Mammary epithelial cell (primary cell): ENCODE measurements at regions of chr5 and their contacts with region 1.

Region 1: DNA sequence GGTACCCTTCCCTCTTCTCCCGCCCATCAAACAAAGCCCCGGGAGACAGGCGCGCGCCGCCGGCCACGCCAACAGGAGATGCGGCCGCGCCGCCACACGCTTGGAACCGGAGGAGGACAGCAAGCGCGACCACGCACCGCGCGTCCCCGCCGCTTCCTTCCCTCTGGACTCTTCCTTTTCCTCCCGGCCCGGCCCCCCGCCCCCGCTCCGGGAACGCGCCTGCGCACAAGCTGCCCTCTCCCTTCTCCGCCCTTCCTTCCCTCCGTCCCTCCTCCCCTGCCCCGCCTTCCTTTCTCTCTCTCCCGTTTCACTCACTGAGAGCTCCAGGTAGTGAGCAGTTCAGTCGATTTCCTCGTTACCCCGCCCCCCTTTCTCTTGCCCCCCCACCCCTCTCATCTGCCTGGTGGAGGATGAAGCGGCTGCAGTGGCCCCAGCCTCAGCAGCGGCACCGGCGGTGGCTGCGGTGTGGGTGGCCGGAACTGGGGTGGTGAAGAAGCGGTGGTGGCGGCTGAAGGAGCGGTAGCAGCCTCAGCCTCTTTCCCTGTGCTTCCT is at the start of gene RASA1:
- DNase-seq: peak; percentile 94
- H3K4me3 ChIP-seq: peak within 1 kb of the TSS; percentile 68 to 92 (median 86)
- H3K27ac ChIP-seq: peak within 1 kb of the TSS; percentile 77
- H3K4me1 ChIP-seq: peaks cover 10% of the 10 kb centered on the region
- H3K27me3 ChIP-seq: no peaks in the 10 kb centered on the region
- CTCF ChIP-seq: no peak
- total RNA-seq, gene RASA1: 45.2 to 57.9 TPM

Region 2: GRCh38 chr5:87121304-87122150 is 146.1 kb before region 1 on chr5:
- CTCF ChIA-PET with region 1: no interaction called
- dilution Hi-C with region 1: no loop called
- in situ Hi-C with region 1: no loop called
- intact Hi-C with region 1: loop called (anchors 1 kb)
- DNase-seq: peak; percentile 88
- H3K4me3 ChIP-seq: peak overlapping the region in 2 of 3 experiments; percentile 19 to 24
- H3K27ac ChIP-seq: peak overlapping the region; percentile 96
- H3K4me1 ChIP-seq: peaks cover 63% of the 10 kb centered on the region
- H3K27me3 ChIP-seq: no peaks in the 10 kb centered on the region
- CTCF ChIP-seq: no peak

Region 3: DNA sequence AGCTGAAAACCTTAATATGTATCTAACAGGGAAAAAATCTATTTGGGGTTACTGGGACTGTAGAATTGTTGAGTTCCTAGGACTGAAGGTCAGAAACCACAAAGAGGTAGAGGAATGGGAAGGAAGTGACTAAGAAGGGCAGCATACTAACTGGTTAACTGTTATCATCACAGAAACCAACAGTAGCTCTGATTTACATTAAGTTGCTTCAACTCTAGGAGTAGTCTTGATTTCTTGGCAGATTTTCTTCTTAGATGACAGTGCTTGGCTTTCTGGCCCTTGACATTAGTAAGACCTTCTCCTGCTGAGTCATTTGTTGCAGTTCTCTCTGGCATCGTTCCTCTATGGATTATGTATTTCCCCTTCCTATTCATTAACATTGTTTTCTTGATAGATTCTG is 116.1 kb before region 1 on chr5:
- CTCF ChIA-PET with region 1: no interaction called
- dilution Hi-C with region 1: no loop called
- in situ Hi-C with region 1: no loop called
- intact Hi-C with region 1: loop called (anchors 10 kb)
- DNase-seq: peak; percentile 91
- H3K4me3 ChIP-seq: no peak overlapping the region
- H3K27ac ChIP-seq: peak overlapping the region; percentile 67
- H3K4me1 ChIP-seq: peaks cover 29% of the 10 kb centered on the region
- H3K27me3 ChIP-seq: no peaks in the 10 kb centered on the region
- CTCF ChIP-seq: no peak

Region 4: GRCh38 chr5:87185838-87186237 is 81.8 kb before region 1 on chr5:
- CTCF ChIA-PET with region 1: no interaction called
- dilution Hi-C with region 1: no loop called
- in situ Hi-C with region 1: no loop called
- intact Hi-C with region 1: loop called (anchors 5 kb)
- DNase-seq: peak; percentile 21
- H3K4me3 ChIP-seq: no peak overlapping the region
- H3K27ac ChIP-seq: no peak overlapping the region
- H3K4me1 ChIP-seq: no peaks in the 10 kb centered on the region
- H3K27me3 ChIP-seq: no peaks in the 10 kb centered on the region
- CTCF ChIP-seq: no peak

Region 5: DNA sequence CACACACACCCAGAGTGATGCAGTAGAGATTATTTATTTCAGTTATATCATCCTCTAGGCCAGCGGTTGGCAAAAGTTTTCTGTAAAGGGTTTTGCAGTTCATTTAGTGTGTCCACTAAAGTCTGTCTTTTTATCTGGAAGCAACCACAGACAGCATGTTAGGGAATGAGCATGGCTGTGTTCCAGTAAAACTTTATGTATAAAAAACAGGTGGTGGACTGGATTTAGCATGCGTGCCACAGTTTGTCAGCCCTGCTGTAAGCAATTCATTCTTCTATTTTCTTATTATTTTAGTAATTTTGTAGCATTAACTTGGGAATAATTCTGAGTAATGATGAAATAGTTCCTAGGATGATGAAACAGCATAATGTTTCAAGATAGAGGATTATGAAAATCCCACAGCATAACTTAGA is 93.4 kb after region 1 on chr5:
- CTCF ChIA-PET with region 1: no interaction called
- dilution Hi-C with region 1: no loop called
- in situ Hi-C with region 1: no loop called
- intact Hi-C with region 1: loop called (anchors 5 kb)
- DNase-seq: no peak
- H3K4me3 ChIP-seq: no peak overlapping the region
- H3K27ac ChIP-seq: no peak overlapping the region
- H3K4me1 ChIP-seq: no peaks in the 10 kb centered on the region
- H3K27me3 ChIP-seq: no peaks in the 10 kb centered on the region
- CTCF ChIP-seq: no peak

Region 6: GRCh38 chr5:87432460-87432859 is 164.8 kb after region 1 on chr5:
- CTCF ChIA-PET with region 1: no interaction called
- dilution Hi-C with region 1: no loop called
- in situ Hi-C with region 1: no loop called
- intact Hi-C with region 1: no loop called
- DNase-seq: no peak
- H3K4me3 ChIP-seq: no peak overlapping the region
- H3K27ac ChIP-seq: no peak overlapping the region
- H3K4me1 ChIP-seq: no peaks in the 10 kb centered on the region
- H3K27me3 ChIP-seq: peaks cover 7% of the 10 kb centered on the region
- CTCF ChIP-seq: no peak